ENCODE measurements at regions of chr14 and their contacts with region 1.

Region 1: GRCh38 chr14:72544619-72545387 is 349.1 kb downstream of the DPF3 start:
- DNase-seq: no peak
- H3K4me3 ChIP-seq: no peak overlapping the region
- H3K27ac ChIP-seq: no peak overlapping the region
- H3K4me1 ChIP-seq: peaks cover 28% of the 10 kb centered on the region
- H3K27me3 ChIP-seq: no peaks in the 10 kb centered on the region
- CTCF ChIP-seq: no peak

Region 2: DNA sequence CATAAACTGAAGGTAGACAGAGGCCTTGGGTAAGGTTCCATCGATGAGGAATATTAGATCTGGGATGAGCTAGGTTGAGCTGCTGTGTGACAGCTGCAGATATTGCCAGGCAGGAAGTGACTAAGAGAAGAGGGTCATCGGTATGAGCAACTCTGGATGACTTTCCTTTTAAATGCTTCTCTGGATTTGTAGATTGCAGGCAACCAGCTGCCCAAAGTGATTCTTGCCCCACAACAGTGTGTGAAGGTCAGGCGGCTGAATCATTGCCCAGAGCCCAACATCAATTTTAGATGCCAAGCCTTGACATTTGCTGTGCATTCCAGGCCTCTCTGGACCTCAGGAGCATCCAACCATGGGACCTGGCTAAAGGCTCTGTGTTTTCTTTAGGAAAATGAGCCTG is 93.2 kb after region 1 on chr14:
- CTCF ChIA-PET with region 1: no interaction called
- dilution Hi-C with region 1: no loop called
- in situ Hi-C with region 1: no loop called
- intact Hi-C with region 1: loop called (anchors 1 kb)
- DNase-seq: peak; percentile 72
- H3K4me3 ChIP-seq: no peak overlapping the region
- H3K27ac ChIP-seq: peak overlapping the region; percentile 5
- H3K4me1 ChIP-seq: peaks cover 27% of the 10 kb centered on the region
- H3K27me3 ChIP-seq: no peaks in the 10 kb centered on the region
- CTCF ChIP-seq: no peak

Region 3: DNA sequence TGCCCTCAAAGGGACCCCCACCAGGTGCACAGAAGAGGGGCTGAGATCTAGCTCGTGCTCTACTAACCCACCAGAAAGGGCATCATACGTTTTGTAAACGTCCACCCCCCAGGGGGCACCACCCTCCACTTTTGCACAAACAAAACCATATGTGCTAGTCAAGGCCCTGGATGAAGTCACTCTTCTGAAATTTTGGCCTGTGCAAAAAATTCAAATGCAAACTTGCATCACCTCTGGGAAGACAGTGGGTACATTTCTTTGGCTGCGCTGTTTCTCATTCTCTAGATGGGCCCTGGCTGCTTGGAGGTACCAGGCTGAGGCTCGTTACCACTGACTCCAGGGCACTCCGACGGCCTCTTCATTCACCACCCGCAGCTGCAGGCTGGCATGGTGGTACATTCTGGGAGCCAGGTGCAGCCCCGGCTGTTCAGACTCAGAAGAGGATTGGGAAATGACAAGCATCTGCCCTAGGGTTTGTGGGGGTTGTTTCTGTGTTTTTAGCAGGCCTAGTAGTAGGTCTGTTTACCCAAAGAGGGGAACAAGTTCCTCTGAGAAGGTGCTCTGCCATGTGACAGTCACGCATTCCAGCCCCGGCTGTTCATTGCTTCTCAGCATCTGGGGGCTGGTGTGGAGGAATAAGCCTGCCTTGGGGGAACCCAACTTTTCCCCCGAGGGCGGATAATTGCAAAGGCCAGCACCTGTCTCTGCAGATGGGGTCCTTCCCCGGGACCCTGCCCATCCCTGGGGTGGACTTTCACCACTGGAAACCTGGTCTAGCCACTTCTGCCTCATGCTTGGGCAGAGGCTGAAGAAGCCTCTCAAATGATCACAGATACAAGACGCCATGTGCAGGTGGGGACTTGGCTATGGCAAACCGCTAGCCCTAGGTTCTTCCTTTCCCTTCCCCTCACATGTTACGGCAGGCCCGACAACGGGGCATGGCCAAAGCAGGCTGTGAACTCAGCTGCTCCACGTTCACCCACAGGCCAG is 201.5 kb after region 1 on chr14:
- CTCF ChIA-PET with region 1: no interaction called
- dilution Hi-C with region 1: no loop called
- in situ Hi-C with region 1: no loop called
- intact Hi-C with region 1: loop called (anchors 2 kb)
- DNase-seq: peak; percentile 37
- H3K4me3 ChIP-seq: no peak overlapping the region
- H3K27ac ChIP-seq: peak overlapping the region; percentile 44
- H3K4me1 ChIP-seq: peaks cover 20% of the 10 kb centered on the region
- H3K27me3 ChIP-seq: no peaks in the 10 kb centered on the region
- CTCF ChIP-seq: no peak

Region 4: DNA sequence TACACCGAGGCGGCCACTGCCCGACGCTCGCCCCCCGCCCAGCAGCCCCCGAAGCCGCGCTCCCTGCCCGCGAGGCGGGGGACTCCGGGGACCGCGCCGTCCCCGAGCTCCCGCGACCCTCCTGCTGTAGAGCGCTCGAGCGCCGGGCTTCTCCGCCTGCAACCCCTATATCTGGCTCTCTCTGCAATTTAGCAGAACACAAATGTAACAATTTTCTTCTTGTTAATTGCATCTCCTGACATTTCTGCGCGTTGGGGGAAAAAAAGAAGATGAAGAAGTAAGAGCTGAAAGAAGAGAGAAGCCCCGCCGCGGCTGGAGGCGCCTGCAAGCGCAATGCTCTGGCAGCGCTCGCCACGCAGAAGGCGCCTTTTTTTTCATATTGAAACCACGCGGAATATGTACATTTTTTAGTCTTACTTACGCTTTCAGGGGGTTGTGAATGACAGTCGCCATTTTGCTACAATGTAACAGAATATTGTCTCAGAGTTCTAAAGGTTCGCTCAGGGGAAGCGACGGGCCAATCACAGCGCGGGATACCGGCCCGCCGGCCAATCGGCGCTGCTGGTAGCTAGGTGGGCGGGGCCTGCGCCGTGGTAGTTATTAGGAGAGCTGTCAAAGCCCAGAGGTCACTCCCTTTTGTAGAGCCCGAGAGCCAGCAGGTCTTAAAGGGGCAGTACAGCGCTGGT is 349.0 kb after region 1 on chr14 and contains the start of gene DPF3:
- CTCF ChIA-PET with region 1: no interaction called
- dilution Hi-C with region 1: no loop called
- in situ Hi-C with region 1: no loop called
- intact Hi-C with region 1: loop called (anchors 1 kb)
- DNase-seq: peak; percentile 95
- H3K4me3 ChIP-seq: peak within 1 kb of the TSS; percentile 68 to 99 (median 94)
- H3K27ac ChIP-seq: no peak within 1 kb of the TSS
- H3K4me1 ChIP-seq: peaks cover 19% of the 10 kb centered on the region
- H3K27me3 ChIP-seq: no peaks in the 10 kb centered on the region
- CTCF ChIP-seq: no peak
- total RNA-seq, gene DPF3: 1.8 to 1.9 TPM

Region 5: GRCh38 chr14:72904840-72905561 is 360.2 kb after region 1 on chr14:
- CTCF ChIA-PET with region 1: no interaction called
- dilution Hi-C with region 1: no loop called
- in situ Hi-C with region 1: no loop called
- intact Hi-C with region 1: loop called (anchors 1 kb)
- DNase-seq: peak; percentile 66
- H3K4me3 ChIP-seq: no peak overlapping the region
- H3K27ac ChIP-seq: no peak overlapping the region
- H3K4me1 ChIP-seq: peaks cover 27% of the 10 kb centered on the region
- H3K27me3 ChIP-seq: no peaks in the 10 kb centered on the region
- CTCF ChIP-seq: peak; percentile 94 to 97

Region 6: GRCh38 chr14:72926292-72927028 is 381.7 kb after region 1 on chr14 and contains the start of gene DCAF4:
- CTCF ChIA-PET with region 1: no interaction called
- dilution Hi-C with region 1: loop called (anchors 10 kb)
- in situ Hi-C with region 1: no loop called
- intact Hi-C with region 1: no loop called
- DNase-seq: peak; percentile 99
- H3K4me3 ChIP-seq: peak within 1 kb of the TSS; percentile 76 to 96 (median 77)
- H3K27ac ChIP-seq: peak within 1 kb of the TSS; percentile 93
- H3K4me1 ChIP-seq: peaks cover 12% of the 10 kb centered on the region
- H3K27me3 ChIP-seq: no peaks in the 10 kb centered on the region
- CTCF ChIP-seq: no peak
- total RNA-seq, gene DCAF4: 24.1 to 46.7 TPM

Region 7: GRCh38 chr14:72948481-72949138 is 403.8 kb after region 1 on chr14:
- CTCF ChIA-PET with region 1: no interaction called
- dilution Hi-C with region 1: no loop called
- in situ Hi-C with region 1: no loop called
- intact Hi-C with region 1: loop called (anchors 1 kb)
- DNase-seq: peak; percentile 41
- H3K4me3 ChIP-seq: no peak overlapping the region
- H3K27ac ChIP-seq: no peak overlapping the region
- H3K4me1 ChIP-seq: no peaks in the 10 kb centered on the region
- H3K27me3 ChIP-seq: no peaks in the 10 kb centered on the region
- CTCF ChIP-seq: peak; percentile 84 to 92

Measured in mammary epithelial cell (primary cell).